CD8-positive, alpha-beta T cell (primary cell): ENCODE measurements at regions of chr6 and their contacts with region 1.

Region 1: DNA sequence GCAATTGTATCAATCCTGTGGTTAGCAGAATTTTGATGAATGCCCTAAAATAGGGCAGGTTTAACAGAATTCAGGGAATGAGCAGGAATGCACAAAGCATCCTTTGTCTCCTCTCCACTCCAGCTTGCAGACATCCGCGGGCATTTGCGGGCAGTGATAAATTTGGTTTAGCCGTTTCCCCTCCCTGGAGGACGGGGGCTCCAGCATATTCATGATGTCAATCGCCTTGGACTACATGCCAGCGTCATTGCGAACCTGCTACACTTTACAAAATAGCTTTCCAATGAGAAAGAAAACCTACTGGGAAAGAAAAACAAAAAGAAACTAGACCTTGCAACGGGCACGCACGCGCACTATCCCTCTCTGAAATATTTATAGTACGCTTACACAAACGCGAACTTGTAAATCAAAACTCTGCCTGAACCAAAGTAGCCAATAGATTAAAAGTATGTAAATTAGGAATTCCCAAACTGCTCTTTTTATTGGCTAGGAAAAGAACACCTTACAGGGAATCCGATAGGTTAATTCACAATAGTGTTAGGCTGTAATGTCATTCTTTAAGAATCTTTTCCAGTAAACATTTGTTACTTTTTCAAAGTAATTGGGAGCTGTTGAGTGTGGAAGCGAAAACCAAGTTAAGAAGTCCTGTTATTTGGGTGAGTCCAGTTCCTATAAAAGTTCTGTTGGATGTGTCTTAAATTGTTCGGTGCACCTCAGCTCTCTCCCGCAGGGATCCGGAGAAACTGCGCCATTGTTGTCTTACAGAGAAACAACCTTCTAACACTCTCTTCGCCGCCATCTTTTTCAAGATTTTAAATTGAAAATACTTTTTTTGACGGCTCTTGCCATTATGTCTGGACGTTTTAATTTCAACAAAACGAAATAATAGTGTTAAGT is 136.7 kb downstream of the HFE start:
- DNase-seq: peak in 8 of 9 experiments; percentile 42 to 90 (median 72)
- ATAC-seq: peak; percentile 85
- H3K4me3 ChIP-seq: peak overlapping the region; percentile 64 to 72
- H3K4me3 Mint-ChIP-seq: no peak overlapping the region
- H3K27ac ChIP-seq: peak overlapping the region; percentile 76 to 87
- H3K27ac Mint-ChIP-seq: no peak overlapping the region
- H3K4me1 ChIP-seq: peaks cover 20% of the 10 kb centered on the region
- H3K4me1 Mint-ChIP-seq: peaks cover 24% of the 10 kb centered on the region
- H3K27me3 ChIP-seq: no peaks in the 10 kb centered on the region
- H3K27me3 Mint-ChIP-seq: no peaks in the 10 kb centered on the region
- CTCF ChIP-seq: no peak

Region 2: GRCh38 chr6:26183581-26184366 is 40.1 kb before region 1 on chr6:
- CTCF ChIA-PET with region 1: interaction called, 3 read pairs
- POLR2A ChIA-PET with region 1: interaction called, 14 read pairs
- intact Hi-C with region 1: no loop called
- DNase-seq: peak in 7 of 9 experiments; percentile 33 to 90 (median 59)
- ATAC-seq: peak; percentile 88
- H3K4me3 ChIP-seq: peak overlapping the region; percentile 60 to 71
- H3K4me3 Mint-ChIP-seq: peak overlapping the region; percentile 100
- H3K27ac ChIP-seq: peak overlapping the region; percentile 61 to 76
- H3K27ac Mint-ChIP-seq: peak overlapping the region; percentile 99
- H3K4me1 ChIP-seq: peaks cover 20% of the 10 kb centered on the region
- H3K4me1 Mint-ChIP-seq: peaks cover 42% of the 10 kb centered on the region
- H3K27me3 ChIP-seq: no peaks in the 10 kb centered on the region
- H3K27me3 Mint-ChIP-seq: no peaks in the 10 kb centered on the region
- CTCF ChIP-seq: no peak

Region 3: GRCh38 chr6:26204332-26205165 is 19.3 kb before region 1 on chr6:
- CTCF ChIA-PET with region 1: no interaction called
- POLR2A ChIA-PET with region 1: interaction called, 136 read pairs
- intact Hi-C with region 1: no loop called
- DNase-seq: peak; percentile 75 to 98 (median 84)
- ATAC-seq: peak; percentile 74
- H3K4me3 ChIP-seq: peak overlapping the region; percentile 54 to 70
- H3K4me3 Mint-ChIP-seq: no peak overlapping the region
- H3K27ac ChIP-seq: peak overlapping the region; percentile 91
- H3K27ac Mint-ChIP-seq: no peak overlapping the region
- H3K4me1 ChIP-seq: peaks cover 31% of the 10 kb centered on the region
- H3K4me1 Mint-ChIP-seq: peaks cover 23% of the 10 kb centered on the region
- H3K27me3 ChIP-seq: no peaks in the 10 kb centered on the region
- H3K27me3 Mint-ChIP-seq: no peaks in the 10 kb centered on the region
- CTCF ChIP-seq: no peak

Region 4: GRCh38 chr6:26240154-26241032 is 16.5 kb after region 1 on chr6:
- CTCF ChIA-PET with region 1: interaction called, 22 read pairs
- POLR2A ChIA-PET with region 1: interaction called, 192 read pairs
- intact Hi-C with region 1: loop called in 1 of 2 experiments (anchors 2 kb)
- DNase-seq: peak; percentile 40 to 93 (median 67)
- ATAC-seq: peak; percentile 81
- H3K4me3 ChIP-seq: peak overlapping the region; percentile 50 to 62
- H3K4me3 Mint-ChIP-seq: peak overlapping the region; percentile 88
- H3K27ac ChIP-seq: peak overlapping the region; percentile 74 to 88
- H3K27ac Mint-ChIP-seq: peak overlapping the region; percentile 98
- H3K4me1 ChIP-seq: peaks cover 8% of the 10 kb centered on the region
- H3K4me1 Mint-ChIP-seq: peaks cover 21% of the 10 kb centered on the region
- H3K27me3 ChIP-seq: no peaks in the 10 kb centered on the region
- H3K27me3 Mint-ChIP-seq: no peaks in the 10 kb centered on the region
- CTCF ChIP-seq: no peak

Region 5: DNA sequence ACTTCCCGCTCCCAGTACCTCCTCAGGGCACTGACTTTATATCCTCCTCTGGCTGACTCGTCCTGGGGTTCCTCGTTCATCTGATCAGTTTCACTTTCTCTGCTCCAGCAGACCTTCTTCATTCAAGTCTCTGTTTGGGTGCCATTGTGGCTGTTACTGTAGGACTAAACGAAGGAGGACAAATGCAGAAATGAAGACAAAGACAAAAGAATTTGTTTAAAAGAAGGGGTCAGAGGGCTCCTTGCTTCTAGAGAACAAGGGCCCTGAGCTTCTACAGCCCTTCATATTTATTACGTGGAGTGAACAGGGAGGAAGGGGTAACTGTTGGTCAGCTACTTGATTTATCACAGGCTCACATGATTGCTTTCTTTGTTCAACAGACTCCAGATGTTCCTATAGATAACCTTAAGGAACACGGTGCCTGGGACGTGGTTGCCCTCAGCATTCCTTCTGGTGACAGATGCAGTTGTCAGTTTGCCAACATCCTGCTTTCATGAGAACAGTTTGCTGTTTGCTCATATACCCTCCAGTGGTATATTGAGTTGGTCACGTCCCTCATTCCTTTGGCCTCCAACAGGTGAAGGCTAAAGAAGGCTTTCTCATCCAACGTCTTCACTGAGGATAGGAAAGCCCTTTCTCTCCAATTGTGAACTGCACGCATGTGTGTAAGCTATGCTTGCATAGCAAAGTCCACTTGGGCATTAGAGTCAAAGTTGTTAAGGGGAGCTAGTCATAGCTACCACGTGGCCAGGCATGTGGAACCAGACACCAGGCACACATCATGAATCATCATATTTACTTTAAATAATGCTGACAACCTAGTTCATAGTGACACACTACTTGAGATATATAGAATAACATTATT is 72.0 kb after region 1 on chr6:
- CTCF ChIA-PET with region 1: no interaction called
- POLR2A ChIA-PET with region 1: no interaction called
- intact Hi-C with region 1: no loop called
- DNase-seq: no peak
- ATAC-seq: no peak
- H3K4me3 ChIP-seq: no peak overlapping the region
- H3K4me3 Mint-ChIP-seq: peak overlapping the region; percentile 20
- H3K27ac ChIP-seq: no peak overlapping the region
- H3K27ac Mint-ChIP-seq: no peak overlapping the region
- H3K4me1 ChIP-seq: no peaks in the 10 kb centered on the region
- H3K4me1 Mint-ChIP-seq: no peaks in the 10 kb centered on the region
- H3K27me3 ChIP-seq: no peaks in the 10 kb centered on the region
- H3K27me3 Mint-ChIP-seq: no peaks in the 10 kb centered on the region
- CTCF ChIP-seq: no peak